ENCODE measurements at regions of chr12 and their contacts with region 1.

Region 1: DNA sequence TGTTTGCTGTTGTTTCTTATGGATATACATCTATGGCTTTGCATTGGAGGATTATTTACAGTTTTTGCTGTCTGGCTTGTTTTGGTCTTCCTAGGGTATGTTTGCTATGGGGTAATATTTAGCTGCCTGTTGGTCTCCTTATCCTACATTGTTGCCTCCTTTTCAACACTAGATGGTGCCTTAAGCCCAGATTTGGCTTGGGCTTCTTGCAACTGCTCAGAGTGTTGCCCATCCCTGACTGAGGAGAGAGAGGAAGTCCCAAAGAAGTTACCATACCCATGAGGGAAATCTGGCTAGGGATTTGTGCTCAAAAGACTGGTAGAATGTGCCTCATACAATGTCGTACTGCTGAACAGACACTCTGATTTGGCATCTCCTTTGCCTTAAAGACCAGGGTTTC is 94.6 kb upstream of the MUCL1 start:
- DNase-seq: no peak

Region 2: GRCh38 chr12:54824402-54824801 is 64.7 kb after region 1 on chr12:
- in situ Hi-C with region 1: no loop called
- DNase-seq: no peak

Region 3: DNA sequence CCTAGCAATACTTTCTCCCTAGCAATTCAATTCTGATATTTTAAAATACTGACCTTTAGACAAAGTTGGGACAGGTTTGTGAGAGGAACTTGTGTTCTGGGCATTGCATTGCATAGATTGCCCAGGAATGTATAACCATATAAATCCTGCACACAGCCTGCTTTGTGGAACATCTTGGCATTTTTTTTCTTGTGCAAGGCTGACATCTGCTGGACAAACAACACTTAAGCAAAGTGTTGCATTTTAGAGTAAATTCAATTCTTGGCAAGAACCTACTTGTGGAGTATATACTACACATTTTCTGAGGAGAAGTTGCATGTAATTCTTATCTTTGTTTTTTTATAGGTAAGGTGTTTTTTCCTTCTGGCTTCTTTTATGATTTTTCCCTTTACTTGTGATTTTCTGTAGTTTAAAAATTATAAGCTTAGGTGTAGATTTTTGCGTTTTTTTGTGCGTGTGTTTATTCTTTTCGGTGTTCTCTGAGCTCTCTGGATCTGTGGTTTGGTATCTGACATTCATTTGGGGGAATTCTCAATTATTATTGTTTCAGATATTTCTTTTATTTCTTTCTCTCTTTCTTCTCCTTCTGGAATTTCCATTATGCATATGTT is 198.4 kb after region 1 on chr12:
- in situ Hi-C with region 1: loop called (anchors 25 kb)
- DNase-seq: peak; percentile 79